Right cardiac atrium (tissue), 5 donors: ENCODE measurements at regions of chr18 and their contacts with region 1.

Region 1: GRCh38 chr18:80147418-80148325 is 38.6 kb downstream of the ADNP2 start:
- DNase-seq: peak; percentile 84 to 93 (median 92)
- ATAC-seq: peak; percentile 93 to 95
- H3K4me3 ChIP-seq: peak overlapping the region; percentile 68
- H3K27ac ChIP-seq: no peak overlapping the region
- H3K4me1 ChIP-seq: no peaks in the 10 kb centered on the region
- H3K27me3 ChIP-seq: no peaks in the 10 kb centered on the region

Region 2: GRCh38 chr18:79924814-79925731 is 222.6 kb before region 1 on chr18:
- intact Hi-C with region 1: loop called in 1 of 4 experiments (anchors 10 kb)
- DNase-seq: peak; percentile 36 to 79 (median 53)
- ATAC-seq: peak; percentile 75 to 79
- H3K4me3 ChIP-seq: no peak overlapping the region
- H3K27ac ChIP-seq: no peak overlapping the region
- H3K4me1 ChIP-seq: peaks cover 3% of the 10 kb centered on the region
- H3K27me3 ChIP-seq: no peaks in the 10 kb centered on the region

Region 3: DNA sequence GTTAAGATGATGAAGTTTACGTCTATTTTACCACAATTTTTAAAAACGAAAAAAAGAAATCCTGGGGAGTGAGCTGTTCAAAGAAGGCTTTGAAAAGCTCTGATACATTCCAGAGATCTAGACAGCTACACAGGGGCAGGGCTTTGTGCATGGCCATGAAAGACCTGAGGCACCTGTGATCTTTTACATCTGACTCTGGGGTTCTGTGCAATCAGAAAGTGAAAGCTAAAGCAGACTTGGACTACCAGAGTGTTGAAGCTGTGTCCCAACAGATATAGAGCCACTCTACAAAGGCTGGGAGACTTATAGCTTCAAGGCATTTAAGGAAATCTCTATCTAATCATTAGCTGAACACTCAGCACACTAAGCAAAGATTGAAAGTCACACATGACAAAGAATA is 65.5 kb after region 1 on chr18:
- intact Hi-C with region 1: no loop called
- DNase-seq: no peak
- ATAC-seq: no peak
- H3K4me3 ChIP-seq: no peak overlapping the region
- H3K27ac ChIP-seq: no peak overlapping the region
- H3K4me1 ChIP-seq: no peaks in the 10 kb centered on the region
- H3K27me3 ChIP-seq: no peaks in the 10 kb centered on the region